ENCODE measurements at regions of chr2 and their contacts with region 1.

Region 1: DNA sequence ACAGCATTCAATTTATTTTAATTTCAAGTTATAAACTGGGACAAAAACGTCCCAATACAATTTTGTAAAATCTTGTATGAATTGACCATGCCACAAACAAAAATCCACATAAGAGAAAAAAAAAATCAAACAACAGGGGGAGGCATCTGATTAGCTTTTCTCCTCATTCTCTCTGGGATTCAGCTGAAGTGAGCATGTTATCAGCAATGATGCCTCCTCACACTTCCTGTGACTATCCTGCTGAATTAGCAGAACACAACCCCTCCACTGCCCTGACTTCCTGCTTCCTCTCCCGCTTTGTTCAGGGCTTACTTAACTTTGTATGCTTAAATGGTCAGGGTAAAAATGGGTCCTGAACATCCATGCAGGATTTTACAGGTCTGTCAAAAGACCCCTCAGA is 132.2 kb upstream of the ITGB6 start:
- DNase-seq: peak; percentile 84
- H3K4me3 ChIP-seq: no peak overlapping the region
- H3K27ac ChIP-seq: peak overlapping the region; percentile 57
- H3K4me1 ChIP-seq: peaks cover 62% of the 10 kb centered on the region
- H3K27me3 ChIP-seq: no peaks in the 10 kb centered on the region
- CTCF ChIP-seq: peak; percentile 37; the same call in 1 of the 2 replicates

Region 2: GRCh38 chr2:160970052-160970965 is 638.0 kb after region 1 on chr2:
- CTCF ChIA-PET with region 1: no interaction called
- POLR2A ChIA-PET with region 1: no interaction called
- intact Hi-C with region 1: loop called (anchors 5 kb)
- DNase-seq: peak; percentile 84
- H3K4me3 ChIP-seq: no peak overlapping the region
- H3K27ac ChIP-seq: no peak overlapping the region
- H3K4me1 ChIP-seq: peaks cover 3% of the 10 kb centered on the region
- H3K27me3 ChIP-seq: no peaks in the 10 kb centered on the region
- CTCF ChIP-seq: peak; percentile 83

Region 3: GRCh38 chr2:160994141-160995002 is 662.1 kb after region 1 on chr2:
- CTCF ChIA-PET with region 1: no interaction called
- POLR2A ChIA-PET with region 1: no interaction called
- intact Hi-C with region 1: loop called (anchors 5 kb)
- DNase-seq: peak; percentile 89
- H3K4me3 ChIP-seq: no peak overlapping the region
- H3K27ac ChIP-seq: no peak overlapping the region
- H3K4me1 ChIP-seq: peaks cover 7% of the 10 kb centered on the region
- H3K27me3 ChIP-seq: no peaks in the 10 kb centered on the region
- CTCF ChIP-seq: peak; percentile 84

Measured in A673 (cell line).